ENCODE measurements at regions of chr4 and their contacts with region 1.

Region 1: DNA sequence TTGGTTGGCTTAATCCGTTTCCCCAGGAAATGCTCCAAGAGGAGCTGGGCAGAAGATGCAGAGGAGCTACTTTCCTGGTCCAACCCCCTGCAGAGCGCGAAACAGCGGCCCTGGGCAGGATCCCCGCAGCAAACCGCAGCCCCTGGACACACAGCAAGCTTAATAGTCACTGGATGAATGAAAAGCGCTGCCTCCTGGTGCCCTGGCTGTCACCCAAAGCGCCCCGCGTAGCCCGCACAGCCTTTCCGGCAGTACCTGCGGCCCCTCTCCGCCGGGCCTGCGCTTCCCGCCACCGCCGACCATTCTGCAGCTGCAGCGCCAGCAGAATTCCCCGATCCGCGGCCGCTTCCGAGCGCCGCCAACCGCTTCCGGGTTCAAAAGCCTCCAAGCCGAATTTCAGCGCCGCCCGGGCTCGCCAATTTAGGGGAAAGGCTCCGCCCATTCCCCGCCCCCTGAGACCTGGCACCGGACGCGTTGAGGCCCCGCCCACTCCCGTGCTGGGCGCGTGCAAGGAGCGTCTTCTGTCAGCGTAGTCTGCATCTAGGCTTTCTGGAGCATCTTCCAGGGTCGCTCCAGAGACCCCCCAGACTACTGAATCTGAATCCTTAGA is at the start of gene HPF1:
- DNase-seq: peak; percentile 97
- H3K4me3 Mint-ChIP-seq: peak within 1 kb of the TSS; percentile 83
- H3K27ac Mint-ChIP-seq: peak within 1 kb of the TSS; percentile 81
- H3K4me1 Mint-ChIP-seq: peaks cover 21% of the 10 kb centered on the region
- H3K27me3 Mint-ChIP-seq: no peaks in the 10 kb centered on the region
- total RNA-seq, gene HPF1: 35.7 to 36.6 TPM

Region 2: DNA sequence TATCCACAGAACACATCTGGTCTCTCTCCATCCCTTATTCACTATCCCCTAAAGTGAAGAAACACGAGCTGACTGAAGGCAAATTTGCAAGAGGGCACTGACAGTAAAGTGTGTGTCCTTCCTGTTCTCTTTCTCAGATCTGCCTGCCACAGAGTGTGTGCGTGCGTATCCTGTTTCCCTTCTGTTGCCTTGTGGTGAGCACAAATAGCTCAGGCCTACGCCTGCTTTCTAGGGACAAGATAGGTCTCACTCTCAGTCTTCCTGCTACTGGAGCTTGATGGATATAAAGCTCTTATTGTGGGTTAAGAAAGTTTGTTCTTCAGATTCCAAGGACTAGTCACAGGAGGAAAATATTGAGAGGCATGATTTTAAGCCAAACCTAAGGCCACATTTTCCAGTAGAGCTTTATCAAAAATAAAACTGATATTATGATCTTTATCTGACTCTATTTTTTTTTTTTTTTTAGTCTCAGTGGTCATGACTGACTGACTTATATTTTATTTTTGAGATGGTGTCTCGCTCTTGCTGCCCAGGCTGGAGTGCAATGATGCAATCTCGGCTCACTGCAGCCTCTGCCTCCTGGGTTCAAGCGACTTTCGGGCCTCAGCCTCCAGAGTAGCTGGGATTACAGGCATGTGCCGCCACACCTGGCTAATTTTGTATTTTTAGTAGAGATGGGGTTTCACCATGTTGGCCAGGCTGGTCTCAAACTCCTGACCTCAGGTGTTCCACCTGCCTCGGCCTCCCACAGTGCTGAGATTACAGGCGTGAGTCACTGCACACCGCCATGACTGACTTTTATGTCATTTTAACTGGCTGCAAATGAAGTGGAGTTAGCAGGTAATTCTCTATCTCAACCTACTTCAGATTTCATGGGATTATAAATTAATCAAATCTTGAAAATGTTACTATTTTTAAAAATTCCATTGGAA is 346.6 kb before region 1 on chr4:
- CTCF ChIA-PET with region 1: no interaction called
- intact Hi-C with region 1: loop called (anchors 5 kb)
- DNase-seq: peak; percentile 83
- H3K4me3 Mint-ChIP-seq: no peak overlapping the region
- H3K27ac Mint-ChIP-seq: peak overlapping the region; percentile 71
- H3K4me1 Mint-ChIP-seq: peaks cover 25% of the 10 kb centered on the region
- H3K27me3 Mint-ChIP-seq: no peaks in the 10 kb centered on the region

Region 3: DNA sequence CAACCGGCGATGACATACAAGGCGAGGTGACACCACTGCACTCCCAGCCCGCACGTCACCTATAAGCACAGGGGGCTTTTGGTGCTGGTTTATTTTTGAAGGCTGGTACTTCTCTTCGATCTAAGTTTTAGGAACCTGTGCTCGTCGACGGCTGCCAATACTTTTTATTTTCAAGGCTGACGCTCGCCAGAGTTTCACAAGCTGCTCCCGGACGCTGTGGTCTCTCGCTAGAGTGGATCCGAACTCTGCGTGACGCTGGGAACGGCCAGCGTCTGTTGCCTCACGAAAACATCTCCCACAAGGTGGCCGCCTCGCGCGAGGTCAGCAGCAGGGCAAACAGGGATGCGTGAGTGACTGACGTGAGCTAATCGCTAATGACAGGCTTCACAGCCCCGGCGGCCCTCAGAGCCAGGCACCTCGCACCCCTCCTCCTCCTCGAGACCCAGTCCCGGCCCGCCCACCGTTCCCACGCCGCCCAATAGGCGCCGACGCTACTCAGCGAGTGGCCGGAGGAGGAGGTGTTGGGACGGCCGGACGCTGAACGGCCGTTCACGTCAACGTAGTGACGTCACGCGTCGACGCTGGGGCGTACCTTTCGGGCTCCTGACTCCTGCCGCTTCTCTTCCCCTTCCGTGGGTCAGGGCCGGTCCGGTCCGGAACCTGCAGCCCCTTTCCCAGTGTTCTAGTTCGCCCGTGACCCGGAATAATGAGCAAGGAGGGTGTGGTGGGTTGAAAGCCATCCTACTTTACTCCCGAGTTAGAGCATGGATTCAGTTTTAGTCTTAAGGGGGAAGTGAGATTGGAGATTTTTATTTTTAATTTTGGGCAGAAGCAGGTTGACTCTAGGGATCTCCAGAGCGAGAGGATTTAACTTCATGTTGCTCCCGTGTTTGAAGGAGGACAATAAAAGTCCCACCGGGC is 137.5 kb before region 1 on chr4 and contains the start of gene CLCN3:
- CTCF ChIA-PET with region 1: no interaction called
- intact Hi-C with region 1: loop called (anchors 1 kb)
- DNase-seq: peak; percentile 90
- H3K4me3 Mint-ChIP-seq: peak within 1 kb of the TSS; percentile 93
- H3K27ac Mint-ChIP-seq: peak within 1 kb of the TSS; percentile 96
- H3K4me1 Mint-ChIP-seq: peaks cover 59% of the 10 kb centered on the region
- H3K27me3 Mint-ChIP-seq: no peaks in the 10 kb centered on the region
- total RNA-seq, gene CLCN3: 17.4 to 18.4 TPM

Region 4: GRCh38 chr4:169791527-169792156 is 34.0 kb after region 1 on chr4:
- CTCF ChIA-PET with region 1: no interaction called
- intact Hi-C with region 1: loop called (anchors 1 kb)
- DNase-seq: peak; percentile 49
- H3K4me3 Mint-ChIP-seq: peak overlapping the region; percentile 47
- H3K27ac Mint-ChIP-seq: no peak overlapping the region
- H3K4me1 Mint-ChIP-seq: peaks cover 12% of the 10 kb centered on the region
- H3K27me3 Mint-ChIP-seq: peaks cover 43% of the 10 kb centered on the region

Region 5: GRCh38 chr4:169854090-169854489 is 96.4 kb after region 1 on chr4:
- CTCF ChIA-PET with region 1: no interaction called
- intact Hi-C with region 1: no loop called
- DNase-seq: no peak
- H3K4me3 Mint-ChIP-seq: no peak overlapping the region
- H3K27ac Mint-ChIP-seq: no peak overlapping the region
- H3K4me1 Mint-ChIP-seq: no peaks in the 10 kb centered on the region
- H3K27me3 Mint-ChIP-seq: peaks cover 6% of the 10 kb centered on the region

Region 6: GRCh38 chr4:170027181-170027829 is 269.6 kb after region 1 on chr4:
- CTCF ChIA-PET with region 1: no interaction called
- intact Hi-C with region 1: loop called (anchors 1 kb)
- DNase-seq: peak; percentile 93
- H3K4me3 Mint-ChIP-seq: peak overlapping the region; percentile 83
- H3K27ac Mint-ChIP-seq: peak overlapping the region; percentile 38
- H3K4me1 Mint-ChIP-seq: peaks cover 7% of the 10 kb centered on the region
- H3K27me3 Mint-ChIP-seq: peaks cover 15% of the 10 kb centered on the region

Measured in activated naive CD4-positive, alpha-beta T cell treated with anti-CD3 and anti-CD28 coated beads for 36 hours (primary cell).